Activated naive CD4-positive, alpha-beta T cell treated with anti-CD3 and anti-CD28 coated beads for 36 hours (primary cell): ENCODE measurements at regions of chr5 and their contacts with region 1.

Region 1: DNA sequence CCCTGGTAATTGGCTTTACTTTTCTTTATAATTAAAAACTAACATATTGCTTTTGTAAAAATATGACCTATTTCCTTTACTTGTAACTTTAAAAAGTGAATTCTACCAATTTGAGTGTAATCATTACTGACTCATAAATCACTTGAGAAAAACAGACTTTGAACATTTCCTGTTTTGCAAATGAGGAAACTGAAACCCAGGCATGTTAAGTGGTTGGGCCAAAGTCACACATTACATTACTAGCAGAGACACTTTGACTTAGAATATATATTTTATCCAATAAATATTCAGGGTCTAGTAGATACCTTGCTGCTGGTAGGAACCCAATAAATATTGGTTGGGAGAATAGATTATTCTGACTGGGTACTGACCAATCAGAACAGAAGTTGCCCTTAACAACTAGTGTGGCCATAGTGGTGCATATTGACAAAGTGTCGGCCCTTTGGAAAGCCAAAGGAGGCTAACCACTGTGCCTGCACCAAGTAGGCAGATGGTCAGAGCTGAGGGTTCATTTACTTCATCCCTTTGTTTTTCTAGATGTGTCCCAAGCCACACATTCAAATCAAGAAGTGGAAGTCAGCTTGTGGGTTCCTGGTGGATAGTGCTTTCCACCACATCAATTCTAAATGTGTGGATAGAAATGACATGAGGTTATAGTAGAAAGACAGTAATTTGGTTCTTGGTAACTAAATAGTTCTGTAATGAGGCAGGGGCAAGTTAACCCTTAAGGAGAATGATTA is 365.1 kb upstream of the RIOK2 start:
- DNase-seq: peak; percentile 11
- H3K4me3 Mint-ChIP-seq: no peak overlapping the region
- H3K27ac Mint-ChIP-seq: peak overlapping the region; percentile 6
- H3K4me1 Mint-ChIP-seq: peaks cover 18% of the 10 kb centered on the region
- H3K27me3 Mint-ChIP-seq: peaks cover 3% of the 10 kb centered on the region

Region 2: DNA sequence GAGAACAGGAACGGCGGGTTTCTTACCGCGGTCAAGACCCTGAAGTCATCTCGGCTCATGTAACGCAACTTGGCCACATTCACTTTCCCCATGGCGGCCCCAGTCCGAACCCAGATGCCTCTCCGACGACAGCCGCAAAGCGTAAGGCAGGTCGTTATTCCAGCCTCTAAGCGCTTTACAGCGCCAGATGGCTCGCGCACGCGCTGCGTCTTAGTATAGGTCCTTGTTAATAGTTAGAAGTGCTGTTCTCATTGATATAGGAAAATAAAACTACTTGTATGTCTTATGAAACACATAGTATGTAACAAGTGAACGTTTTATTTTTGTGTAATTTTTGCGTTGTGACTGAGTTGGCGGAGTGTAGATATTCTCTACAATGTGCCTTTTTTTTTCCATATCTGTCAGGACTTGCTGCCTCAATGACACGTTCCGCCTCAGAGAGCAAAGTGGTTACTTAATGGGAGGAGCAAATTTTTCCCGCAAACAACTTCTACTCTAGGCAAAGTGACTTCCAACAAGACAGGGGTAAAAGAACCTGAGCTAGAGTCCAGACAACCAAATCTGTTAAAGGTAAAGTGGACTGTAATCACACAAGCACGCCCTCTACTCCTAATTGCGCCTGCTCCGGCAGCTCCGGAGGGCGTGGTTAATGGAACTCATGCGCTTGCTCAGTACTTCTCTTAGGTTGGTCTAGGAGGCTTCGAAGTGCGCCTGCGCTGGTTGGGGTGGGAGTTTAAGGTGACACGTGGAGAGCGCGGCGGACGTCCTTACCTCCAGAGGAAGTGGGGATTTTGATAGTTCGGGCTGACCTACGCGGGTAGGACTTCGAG is 364.9 kb before region 1 on chr5 and contains the start of gene RIOK2:
- CTCF ChIA-PET with region 1: no interaction called
- intact Hi-C with region 1: loop called (anchors 1 kb)
- DNase-seq: peak; percentile 97
- H3K4me3 Mint-ChIP-seq: peak within 1 kb of the TSS; percentile 93
- H3K27ac Mint-ChIP-seq: peak within 1 kb of the TSS; percentile 99
- H3K4me1 Mint-ChIP-seq: peaks cover 33% of the 10 kb centered on the region
- H3K27me3 Mint-ChIP-seq: no peaks in the 10 kb centered on the region
- total RNA-seq, gene RIOK2: 29.1 to 32.0 TPM

Region 3: DNA sequence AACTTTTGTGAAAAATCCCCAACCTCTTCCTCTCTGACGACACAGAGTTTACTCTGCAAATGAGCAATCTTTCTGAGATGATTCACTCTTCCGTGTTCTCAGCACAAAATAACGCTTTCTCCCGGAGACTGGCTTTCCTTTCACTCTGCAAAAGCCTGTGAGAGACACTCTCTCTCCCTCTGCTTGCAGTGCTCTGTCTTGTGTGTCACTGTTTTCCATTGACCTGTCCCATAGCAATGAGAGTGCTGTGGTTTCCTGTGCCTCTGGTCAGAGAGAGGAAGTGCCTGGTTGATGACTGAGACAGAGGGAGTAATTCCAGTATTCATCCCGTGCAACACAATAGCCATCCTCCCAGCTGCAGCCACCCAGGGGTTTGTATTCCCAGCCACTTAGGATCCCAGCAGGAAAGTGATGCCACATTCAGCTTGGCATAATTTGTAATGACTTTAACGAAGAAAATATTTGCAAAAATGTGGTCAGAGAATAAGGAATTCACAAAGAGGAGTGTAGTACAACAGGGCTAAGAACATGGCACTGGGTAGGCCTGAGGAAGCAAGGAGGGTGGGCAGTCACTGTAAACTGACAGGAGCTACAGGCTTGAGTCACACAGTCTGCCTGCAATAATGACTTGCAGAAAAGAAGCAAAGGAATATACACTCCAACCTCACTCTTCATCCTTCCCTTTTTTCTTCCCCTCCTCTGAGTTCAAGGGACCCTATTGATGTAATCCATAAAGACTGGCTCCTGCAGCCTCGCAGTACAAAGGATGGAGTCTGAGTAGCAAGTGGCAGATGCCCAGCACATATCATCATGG is 761.8 kb after region 1 on chr5:
- CTCF ChIA-PET with region 1: no interaction called
- intact Hi-C with region 1: loop called (anchors 5 kb)
- DNase-seq: peak; percentile 39
- H3K4me3 Mint-ChIP-seq: no peak overlapping the region
- H3K27ac Mint-ChIP-seq: peak overlapping the region; percentile 22
- H3K4me1 Mint-ChIP-seq: peaks cover 8% of the 10 kb centered on the region
- H3K27me3 Mint-ChIP-seq: peaks cover 7% of the 10 kb centered on the region

Region 4: GRCh38 chr5:99025298-99026045 is 1477.3 kb after region 1 on chr5:
- CTCF ChIA-PET with region 1: no interaction called
- intact Hi-C with region 1: loop called (anchors 5 kb)
- DNase-seq: no peak
- H3K4me3 Mint-ChIP-seq: no peak overlapping the region
- H3K27ac Mint-ChIP-seq: no peak overlapping the region
- H3K4me1 Mint-ChIP-seq: peaks cover 34% of the 10 kb centered on the region
- H3K27me3 Mint-ChIP-seq: peaks cover 4% of the 10 kb centered on the region